Activated T-helper 2 cell treated with anti-CD3 and anti-CD28 coated beads, Interferon-gamma antibody, Interleukin-2, Interleukin-4, amounts not matched to agents 10 μg/mL and 5 μg/mL and 100 μg/mL, durations not matched to agents 14 hours and 24 hours and 36 hours (primary cell): ENCODE measurements at regions of chr5 and their contacts with region 1.

Region 1: DNA sequence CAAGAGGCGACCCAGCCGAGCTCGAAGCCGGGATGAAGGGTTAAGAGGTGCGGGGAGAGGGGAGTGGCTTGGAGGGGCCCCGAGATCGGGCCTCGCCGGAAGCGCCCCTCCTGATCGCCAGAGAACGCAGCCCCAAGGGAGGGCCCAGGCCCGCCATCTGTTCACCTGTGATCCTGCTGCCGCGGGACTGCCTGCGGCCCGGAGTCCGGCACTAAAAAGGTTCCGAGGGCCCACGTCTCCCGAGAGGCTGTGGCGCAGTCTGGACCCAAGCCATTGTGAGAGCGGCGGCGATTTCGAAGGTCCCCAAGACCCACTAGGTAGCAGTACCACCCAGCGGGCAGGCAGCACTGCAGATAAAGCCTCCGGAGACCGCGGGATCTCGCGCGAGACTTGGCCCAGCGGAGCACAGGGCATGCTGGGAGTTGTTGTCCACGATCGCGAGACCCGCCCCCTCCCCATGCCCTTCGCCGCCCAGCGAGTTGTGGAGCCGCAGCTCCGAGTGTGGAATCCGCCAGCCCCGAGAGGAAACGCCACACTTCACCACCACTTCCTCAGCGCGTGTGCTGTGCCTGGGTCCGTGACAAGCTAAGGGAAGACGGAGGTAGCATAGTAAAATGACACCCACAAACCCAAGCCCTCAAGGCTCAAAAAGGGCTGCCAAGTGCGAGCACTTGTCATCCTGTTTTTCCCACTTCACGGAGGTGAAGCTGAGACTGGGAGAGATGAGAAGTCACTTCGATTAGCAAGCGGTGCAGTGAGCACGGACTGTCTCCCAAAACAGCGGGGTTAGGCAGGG is at the start of gene KIAA1191:
- DNase-seq: peak; percentile 92
- H3K4me3 Mint-ChIP-seq: peak within 1 kb of the TSS; percentile 92
- H3K27ac Mint-ChIP-seq: peak within 1 kb of the TSS; percentile 85
- H3K4me1 Mint-ChIP-seq: peaks cover 24% of the 10 kb centered on the region
- H3K27me3 Mint-ChIP-seq: no peaks in the 10 kb centered on the region
- total RNA-seq, gene KIAA1191: 55.5 and 61.3 TPM in 2 replicates

Region 2: DNA sequence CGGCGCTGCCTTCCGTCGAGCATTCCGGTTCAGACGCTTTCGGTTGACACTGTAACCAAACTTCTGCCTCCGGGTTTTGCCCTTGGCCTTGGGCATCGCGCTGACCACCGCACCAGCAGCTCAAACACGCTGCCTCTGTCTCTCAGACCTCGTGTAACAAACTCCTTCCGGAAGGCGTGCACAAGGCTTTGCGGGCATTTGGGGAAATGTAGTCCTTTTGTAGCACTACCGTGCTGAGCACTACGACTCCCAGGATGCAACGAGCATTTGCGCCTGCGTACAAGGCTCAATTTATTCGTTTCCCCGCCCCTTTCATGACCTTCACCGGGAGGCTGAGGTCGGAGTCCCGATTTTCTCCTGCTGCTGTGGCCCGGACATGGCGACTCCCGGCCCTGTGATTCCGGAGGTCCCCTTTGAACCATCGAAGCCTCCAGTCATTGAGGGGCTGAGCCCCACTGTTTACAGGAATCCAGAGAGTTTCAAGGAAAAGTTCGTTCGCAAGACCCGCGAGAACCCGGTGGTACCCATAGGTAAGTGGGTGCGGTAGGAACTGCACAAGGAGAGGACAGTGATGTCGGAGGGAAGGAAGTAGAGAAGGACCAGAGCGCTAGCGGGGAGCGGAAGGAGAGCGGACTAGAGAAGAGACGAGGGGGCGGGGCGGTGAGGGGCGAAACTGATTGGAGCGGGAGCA is 27.0 kb after region 1 on chr5 and contains the starts of genes HIGD2A and NOP16:
- intact Hi-C with region 1: loop called (anchors 1 kb)
- DNase-seq: peak; percentile 98
- H3K4me3 Mint-ChIP-seq: peak within 1 kb of the TSS; percentile 97
- H3K27ac Mint-ChIP-seq: peak within 1 kb of the TSS; percentile 99
- H3K4me1 Mint-ChIP-seq: peaks cover 21% of the 10 kb centered on the region
- H3K27me3 Mint-ChIP-seq: no peaks in the 10 kb centered on the region
- total RNA-seq, gene HIGD2A: 102 and 105 TPM in 2 replicates
- total RNA-seq, gene NOP16: 79.6 and 84.0 TPM in 2 replicates

Region 3: GRCh38 chr5:176466245-176466871 is 104.7 kb after region 1 on chr5:
- intact Hi-C with region 1: no loop called
- DNase-seq: no peak
- H3K4me3 Mint-ChIP-seq: no peak overlapping the region
- H3K27ac Mint-ChIP-seq: no peak overlapping the region
- H3K4me1 Mint-ChIP-seq: peaks cover 7% of the 10 kb centered on the region
- H3K27me3 Mint-ChIP-seq: no peaks in the 10 kb centered on the region